H1 (cell line): ENCODE measurements at regions of chr18 and their contacts with region 1.

Region 1: GRCh38 chr18:63155169-63155852 is 164.3 kb downstream of the BCL2 start:
- DNase-seq: peak; percentile 50 to 95
- H3K4me3 ChIP-seq: no peak overlapping the region
- H3K27ac ChIP-seq: no peak overlapping the region
- H3K4me1 ChIP-seq: peaks cover 0 to 3% (median 3%) of the 10 kb centered on the region in 4 experiments; a peak in 4 of 7 replicates
- H3K27me3 ChIP-seq: no peaks in the 10 kb centered on the region; a peak in 1 of 7 replicates
- CTCF ChIP-seq: peak; percentile 94 to 96 (median 96)
- EP300 ChIP-seq: no peak
- POLR2A ChIP-seq: no peak
- RAD21 ChIP-seq: peak; percentile 82 to 89

Region 2: GRCh38 chr18:63016270-63016669 is 139.0 kb before region 1 on chr18:
- CTCF ChIA-PET with region 1: interaction called, 27 read pairs
- POLR2A ChIA-PET with region 1: no interaction called
- DNase-seq: peak in 1 of 2 experiments; percentile 50
- H3K4me3 ChIP-seq: no peak overlapping the region
- H3K27ac ChIP-seq: no peak overlapping the region
- H3K4me1 ChIP-seq: no peaks in the 10 kb centered on the region
- H3K27me3 ChIP-seq: no peaks in the 10 kb centered on the region
- CTCF ChIP-seq: peak; percentile 44 to 76 (median 74)
- EP300 ChIP-seq: no peak
- POLR2A ChIP-seq: no peak
- RAD21 ChIP-seq: peak; percentile 89 to 93

Region 3: GRCh38 chr18:63119647-63120046 is 35.7 kb before region 1 on chr18:
- CTCF ChIA-PET with region 1: interaction called, 16 read pairs
- POLR2A ChIA-PET with region 1: no interaction called
- DNase-seq: peak in 1 of 2 experiments; percentile 3
- H3K4me3 ChIP-seq: no peak overlapping the region
- H3K27ac ChIP-seq: no peak overlapping the region
- H3K4me1 ChIP-seq: no peaks in the 10 kb centered on the region
- H3K27me3 ChIP-seq: no peaks in the 10 kb centered on the region
- CTCF ChIP-seq: peak; percentile 62 to 71 (median 69)
- EP300 ChIP-seq: no peak
- POLR2A ChIP-seq: no peak
- RAD21 ChIP-seq: peak; percentile 71 to 79

Region 4: DNA sequence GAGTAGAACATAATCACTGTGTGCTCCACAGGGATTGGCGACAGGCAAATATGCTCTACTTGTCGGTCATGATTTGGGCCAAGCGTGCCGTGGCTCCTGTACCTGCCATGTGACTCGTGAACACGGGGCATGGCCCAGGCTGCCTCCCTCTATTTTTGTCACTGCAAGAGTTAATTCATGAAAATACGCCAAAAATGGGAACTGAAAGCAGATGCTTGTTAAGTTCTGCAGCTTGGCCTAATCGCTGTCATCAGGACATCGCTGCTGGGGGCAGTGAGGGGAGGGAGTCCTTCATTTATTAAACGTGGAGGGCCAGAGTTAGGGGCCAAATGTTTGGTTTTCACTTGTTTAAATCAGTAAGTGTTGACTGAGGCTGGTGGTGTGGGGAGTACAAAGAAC is 13.5 kb before region 1 on chr18:
- CTCF ChIA-PET with region 1: interaction called, 34 read pairs
- POLR2A ChIA-PET with region 1: interaction called, 3 read pairs
- DNase-seq: no peak
- H3K4me3 ChIP-seq: no peak overlapping the region
- H3K27ac ChIP-seq: no peak overlapping the region
- H3K4me1 ChIP-seq: peaks cover 0 to 20% (median 6%) of the 10 kb centered on the region in 4 experiments; a peak in 6 of 7 replicates
- H3K27me3 ChIP-seq: no peaks in the 10 kb centered on the region; a peak in 1 of 7 replicates
- CTCF ChIP-seq: no peak
- EP300 ChIP-seq: no peak
- POLR2A ChIP-seq: no peak
- RAD21 ChIP-seq: no peak

Region 5: DNA sequence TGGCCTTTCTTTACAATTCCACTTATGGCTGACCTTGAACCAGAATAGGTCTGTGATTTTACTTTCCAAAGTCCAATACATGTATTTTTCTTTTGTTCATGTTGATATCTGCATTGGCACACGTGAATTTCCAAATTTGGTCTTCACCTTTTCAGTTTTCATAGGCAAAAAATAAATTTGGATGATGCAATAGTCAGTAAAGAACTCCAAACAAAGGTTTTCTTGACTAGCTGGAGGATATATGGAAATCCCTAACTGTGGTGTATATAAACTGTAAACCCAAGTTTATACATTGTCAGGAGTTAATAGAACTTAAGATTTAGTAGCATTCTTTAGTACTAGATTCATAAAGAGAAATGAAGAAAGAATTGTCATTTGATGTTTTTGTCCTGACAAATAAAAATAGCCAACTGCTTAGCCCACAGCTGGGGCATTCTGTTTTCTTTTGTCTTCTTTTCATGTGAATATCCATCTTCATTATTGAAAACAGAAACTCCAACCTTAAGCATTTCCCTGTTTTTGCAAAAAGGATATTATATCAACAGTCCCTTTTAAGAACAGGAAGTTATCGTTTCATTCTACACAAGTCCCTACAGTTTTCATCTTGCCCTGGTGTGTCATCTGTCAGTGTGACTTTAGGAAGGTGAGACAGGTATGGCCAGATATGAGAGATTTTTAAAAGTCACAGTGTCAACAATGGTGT is 31.4 kb after region 1 on chr18:
- CTCF ChIA-PET with region 1: no interaction called
- POLR2A ChIA-PET with region 1: no interaction called
- DNase-seq: no peak
- H3K4me3 ChIP-seq: no peak overlapping the region
- H3K27ac ChIP-seq: no peak overlapping the region
- H3K4me1 ChIP-seq: no peaks in the 10 kb centered on the region
- H3K27me3 ChIP-seq: no peaks in the 10 kb centered on the region
- CTCF ChIP-seq: no peak
- EP300 ChIP-seq: no peak
- POLR2A ChIP-seq: no peak
- RAD21 ChIP-seq: no peak

Region 6: DNA sequence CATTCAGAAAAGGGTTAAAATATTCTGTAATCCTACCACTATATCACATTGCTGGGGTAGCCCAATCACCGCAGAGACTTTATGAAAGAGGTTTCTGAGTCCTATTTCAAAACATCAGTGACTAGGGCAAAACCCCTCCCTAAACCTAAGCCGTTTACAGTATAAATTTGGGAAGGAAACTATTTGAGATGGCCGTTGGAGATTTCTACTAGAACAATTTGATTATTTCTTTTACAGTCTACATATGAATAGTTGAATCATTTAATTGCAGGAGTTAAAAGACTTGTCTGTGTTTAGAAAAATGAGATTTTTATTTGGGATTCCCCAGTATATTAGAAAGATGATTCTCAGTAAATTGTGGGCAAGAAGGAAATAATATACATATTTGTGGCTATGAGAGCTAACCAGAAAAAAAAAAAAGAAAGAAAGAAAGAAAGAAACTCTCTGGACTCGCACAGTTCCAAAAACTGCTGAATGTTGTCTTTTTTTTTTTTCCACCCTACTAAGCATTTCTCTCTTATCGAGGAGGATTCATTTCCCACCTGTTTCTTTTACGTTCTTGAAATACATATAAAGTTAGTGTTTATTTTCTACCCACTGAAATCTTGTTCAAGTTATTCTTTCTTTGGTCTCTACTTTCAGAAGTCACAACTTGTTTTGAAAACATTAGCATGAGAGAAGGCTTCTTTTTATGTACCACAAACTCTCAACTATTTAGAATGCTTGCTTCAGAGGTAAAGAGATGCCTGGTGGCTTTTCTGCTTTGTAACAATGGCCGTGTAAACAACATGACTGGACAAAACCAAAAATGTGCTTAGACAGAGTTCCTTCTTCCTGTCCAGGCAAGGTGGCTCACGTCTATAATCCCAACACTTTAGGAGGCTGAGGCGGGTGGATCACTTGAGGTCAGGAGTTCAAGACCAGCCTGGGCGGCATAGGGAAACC is 98.4 kb after region 1 on chr18:
- CTCF ChIA-PET with region 1: no interaction called
- POLR2A ChIA-PET with region 1: no interaction called
- DNase-seq: no peak
- H3K4me3 ChIP-seq: no peak overlapping the region
- H3K27ac ChIP-seq: no peak overlapping the region
- H3K4me1 ChIP-seq: no peaks in the 10 kb centered on the region
- H3K27me3 ChIP-seq: no peaks in the 10 kb centered on the region; a peak in 1 of 7 replicates
- CTCF ChIP-seq: no peak
- EP300 ChIP-seq: no peak
- POLR2A ChIP-seq: no peak
- RAD21 ChIP-seq: no peak

Region 7: GRCh38 chr18:63348508-63349136 is 193.3 kb after region 1 on chr18:
- CTCF ChIA-PET with region 1: no interaction called
- POLR2A ChIA-PET with region 1: no interaction called
- DNase-seq: no peak
- H3K4me3 ChIP-seq: no peak overlapping the region
- H3K27ac ChIP-seq: no peak overlapping the region
- H3K4me1 ChIP-seq: no peaks in the 10 kb centered on the region
- H3K27me3 ChIP-seq: no peaks in the 10 kb centered on the region
- CTCF ChIP-seq: no peak
- EP300 ChIP-seq: no peak
- POLR2A ChIP-seq: no peak
- RAD21 ChIP-seq: no peak